Activated T-helper 2 cell treated with anti-CD3 and anti-CD28 coated beads, Interferon-gamma antibody, Interleukin-2, Interleukin-4, amounts not matched to agents 10 μg/mL and 5 μg/mL and 100 μg/mL, durations not matched to agents 14 hours and 24 hours and 36 hours (primary cell): ENCODE measurements at regions of chr2 and their contacts with region 1.

Region 1: GRCh38 chr2:202911512-202912341 is at the starts of genes CARF and WDR12:
- DNase-seq: peak; percentile 89
- H3K4me3 Mint-ChIP-seq: peak within 1 kb of the TSS; percentile 95
- H3K27ac Mint-ChIP-seq: peak within 1 kb of the TSS; percentile 98
- H3K4me1 Mint-ChIP-seq: peaks cover 26% of the 10 kb centered on the region
- H3K27me3 Mint-ChIP-seq: no peaks in the 10 kb centered on the region
- total RNA-seq, gene CARF: 4.6 and 5.0 TPM in 2 replicates
- total RNA-seq, gene WDR12: 128 and 139 TPM in 2 replicates

Region 2: DNA sequence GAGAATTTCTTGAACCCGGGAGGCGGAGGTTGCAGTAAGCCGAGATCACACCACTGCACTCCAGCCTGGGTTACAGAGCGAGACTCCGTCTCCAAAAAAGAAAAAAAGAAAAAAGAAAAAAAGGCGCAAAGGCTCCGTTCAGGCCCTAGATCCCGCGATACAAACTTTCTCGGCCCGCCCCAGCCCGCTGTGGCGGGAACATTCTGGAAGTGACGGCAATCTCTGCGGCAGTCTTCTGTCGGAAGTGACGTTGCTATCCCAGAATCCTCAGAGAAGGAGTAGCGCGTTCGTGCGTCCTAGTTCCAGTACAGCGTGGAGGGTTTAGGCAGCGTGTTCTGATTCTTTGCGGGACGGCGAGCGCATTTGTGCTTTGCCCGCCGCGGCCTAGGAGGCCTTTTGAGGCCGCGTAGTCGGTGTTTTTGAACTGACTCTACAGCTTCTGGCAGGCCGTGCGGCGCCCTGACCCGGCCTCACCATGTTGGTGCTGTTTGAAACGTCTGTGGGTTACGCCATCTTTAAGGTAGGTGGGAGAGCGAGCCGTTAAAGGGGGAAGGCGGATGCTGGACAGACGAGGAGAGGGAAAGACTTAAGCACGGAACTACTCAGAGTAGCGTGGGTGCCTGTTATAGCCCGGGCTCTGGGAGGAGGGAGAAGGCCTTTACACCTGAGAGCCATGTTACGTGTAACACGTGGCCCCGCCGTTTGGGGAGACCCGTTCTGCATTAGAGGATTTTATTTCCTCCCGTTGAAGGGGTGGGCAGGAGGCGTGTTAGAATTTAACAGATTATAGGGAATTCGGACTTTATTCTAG is 646.1 kb before region 1 on chr2 and contains the start of gene NOP58:
- intact Hi-C with region 1: loop called (anchors 5 kb)
- DNase-seq: peak; percentile 92
- H3K4me3 Mint-ChIP-seq: peak within 1 kb of the TSS; percentile 58
- H3K27ac Mint-ChIP-seq: peak within 1 kb of the TSS; percentile 69
- H3K4me1 Mint-ChIP-seq: peaks cover 15% of the 10 kb centered on the region
- H3K27me3 Mint-ChIP-seq: no peaks in the 10 kb centered on the region
- total RNA-seq, gene NOP58: 206 and 211 TPM in 2 replicates

Region 3: GRCh38 chr2:202718614-202719013 is 193.1 kb before region 1 on chr2:
- intact Hi-C with region 1: no loop called
- DNase-seq: no peak
- H3K4me3 Mint-ChIP-seq: no peak overlapping the region
- H3K27ac Mint-ChIP-seq: no peak overlapping the region
- H3K4me1 Mint-ChIP-seq: peaks cover 6% of the 10 kb centered on the region
- H3K27me3 Mint-ChIP-seq: no peaks in the 10 kb centered on the region

Region 4: DNA sequence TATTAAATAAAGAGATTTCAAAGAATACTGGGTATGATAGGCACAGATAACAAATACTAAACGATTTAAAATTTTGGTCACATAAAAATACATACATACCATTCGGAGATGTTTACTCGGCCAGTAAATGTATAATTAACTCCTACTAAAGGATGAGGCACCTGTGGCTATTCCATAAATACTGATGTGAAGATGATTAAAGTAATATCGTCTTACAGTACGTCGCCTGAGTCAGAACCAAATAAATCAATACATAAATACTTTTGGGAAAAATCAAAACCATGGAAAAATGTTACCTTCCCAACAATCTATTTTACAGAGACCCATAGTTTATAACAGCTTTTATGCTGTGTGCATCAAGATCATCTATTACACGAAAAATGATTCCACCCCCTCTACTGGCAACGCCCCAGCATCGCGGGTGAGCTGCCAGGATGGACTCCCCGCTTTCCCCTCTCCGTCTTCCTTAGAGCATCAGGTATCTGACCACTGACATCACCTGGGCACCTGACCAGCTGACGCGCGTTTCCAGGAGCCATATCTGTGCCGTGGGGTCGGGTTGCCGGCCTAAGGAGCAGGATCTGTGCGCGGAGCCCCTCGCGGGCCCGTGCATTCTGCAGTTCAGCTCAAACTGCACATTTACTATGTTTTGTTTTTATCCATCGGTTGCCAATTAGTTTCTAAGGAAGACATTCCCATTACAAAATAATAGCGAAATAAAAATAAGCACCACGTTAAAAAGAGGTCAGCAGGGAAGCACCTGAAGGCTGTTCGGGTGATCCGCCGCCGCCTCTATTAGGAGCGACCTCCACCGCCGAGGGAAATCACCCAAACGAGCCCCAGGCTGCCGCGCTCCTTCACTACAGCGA is 41.1 kb before region 1 on chr2:
- intact Hi-C with region 1: loop called (anchors 2 kb)
- DNase-seq: peak; percentile 58
- H3K4me3 Mint-ChIP-seq: peak overlapping the region; percentile 84
- H3K27ac Mint-ChIP-seq: peak overlapping the region; percentile 74
- H3K4me1 Mint-ChIP-seq: peaks cover 11% of the 10 kb centered on the region
- H3K27me3 Mint-ChIP-seq: no peaks in the 10 kb centered on the region

Region 5: DNA sequence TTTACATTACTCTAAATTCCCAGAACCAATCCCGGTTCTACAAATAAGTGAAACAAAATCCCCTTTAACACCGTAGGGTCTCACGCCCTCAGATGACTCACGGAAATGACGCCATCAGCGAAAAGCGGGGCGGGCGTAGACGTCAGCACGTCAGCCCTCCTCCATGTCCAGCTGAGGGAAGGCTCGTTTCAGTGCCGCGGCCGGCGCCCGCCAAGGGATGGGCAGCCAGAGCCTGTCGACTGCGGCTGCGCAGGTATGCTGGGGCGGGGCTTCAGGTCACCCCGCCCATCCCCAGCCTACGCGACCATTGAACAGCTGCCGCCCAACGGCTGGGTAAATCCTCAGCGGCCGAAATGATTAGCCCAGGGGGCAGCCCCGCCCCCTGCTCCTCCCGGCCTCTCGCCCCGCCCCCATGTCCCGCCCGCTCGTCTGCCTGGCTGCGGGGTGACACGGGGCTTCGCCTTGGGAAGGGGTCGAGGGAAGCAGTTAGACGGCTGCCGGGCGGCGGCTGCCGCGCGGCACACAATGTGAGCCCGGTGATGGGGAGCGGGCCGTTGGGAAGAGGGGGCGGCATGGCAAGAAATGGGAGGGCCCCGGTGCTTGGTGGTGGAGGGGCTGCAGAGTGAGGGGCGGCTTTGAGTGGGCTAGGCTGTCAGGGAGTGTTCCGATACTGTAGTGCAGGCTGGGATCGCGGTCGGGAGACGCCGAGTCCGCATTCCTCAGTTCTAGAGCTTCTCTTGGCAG is 102.9 kb after region 1 on chr2 and contains the start of gene NBEAL1:
- intact Hi-C with region 1: loop called (anchors 1 kb)
- DNase-seq: peak; percentile 96
- H3K4me3 Mint-ChIP-seq: peak within 1 kb of the TSS; percentile 98
- H3K27ac Mint-ChIP-seq: peak within 1 kb of the TSS; percentile 92
- H3K4me1 Mint-ChIP-seq: peaks cover 28% of the 10 kb centered on the region
- H3K27me3 Mint-ChIP-seq: peaks cover 16% of the 10 kb centered on the region
- total RNA-seq, gene NBEAL1: 10.6 and 12.2 TPM in 2 replicates

Region 6: GRCh38 chr2:203238704-203239526 is 327.2 kb after region 1 on chr2 and contains the start of gene CYP20A1:
- intact Hi-C with region 1: loop called (anchors 1 kb)
- DNase-seq: peak; percentile 96
- H3K4me3 Mint-ChIP-seq: peak within 1 kb of the TSS; percentile 91
- H3K27ac Mint-ChIP-seq: peak within 1 kb of the TSS; percentile 100
- H3K4me1 Mint-ChIP-seq: peaks cover 18% of the 10 kb centered on the region
- H3K27me3 Mint-ChIP-seq: no peaks in the 10 kb centered on the region
- total RNA-seq, gene CYP20A1: 21.0 and 23.2 TPM in 2 replicates